Activated CD8-positive, alpha-beta memory T cell treated with anti-CD3 and anti-CD28 coated beads, Interleukin-2, amount 10 ng/mL, durations not matched to agents 7 days and 5 days (primary cell): ENCODE measurements at regions of chr11 and their contacts with region 1.

Region 1: DNA sequence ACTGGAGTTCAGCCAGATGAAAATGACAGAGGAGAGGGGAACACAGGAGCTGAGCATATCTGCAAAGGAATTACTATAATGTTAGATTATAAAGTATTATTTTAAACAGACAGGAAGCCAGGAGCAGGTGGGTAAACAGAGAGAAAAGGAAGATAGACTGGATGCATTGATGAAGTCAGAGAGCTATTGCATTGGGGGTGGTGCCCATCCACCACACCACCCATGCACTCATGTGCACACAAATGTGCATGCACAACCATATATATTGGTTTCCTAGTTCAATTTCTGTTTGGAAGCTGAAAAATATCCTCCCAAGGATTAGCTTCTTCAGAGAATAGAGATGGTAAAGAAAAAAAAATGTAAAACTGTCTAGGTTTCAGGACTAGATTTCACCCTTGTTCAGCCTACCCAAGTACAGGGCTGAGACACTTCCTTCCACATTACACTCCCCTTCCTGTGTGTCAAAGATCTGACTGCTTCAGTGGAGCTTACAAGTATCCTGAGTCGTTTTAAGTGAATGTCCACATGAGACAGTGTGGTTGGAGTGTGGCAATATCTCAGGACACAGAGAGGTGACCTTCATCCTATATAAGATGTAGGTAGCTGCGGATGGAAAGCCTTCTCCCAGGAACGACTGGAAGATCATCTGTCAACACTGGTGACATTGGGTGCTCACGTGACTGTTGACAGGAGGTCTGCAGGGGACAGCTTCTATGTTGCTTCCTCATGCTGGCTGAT is 12.2 kb upstream of the SMPD1 start:
- DNase-seq: no peak
- ATAC-seq: peak; percentile 79
- H3K4me3 Mint-ChIP-seq: peak overlapping the region; percentile 38
- H3K27ac Mint-ChIP-seq: peak overlapping the region; percentile 86
- H3K4me1 Mint-ChIP-seq: peaks cover 31% of the 10 kb centered on the region
- H3K27me3 Mint-ChIP-seq: no peaks in the 10 kb centered on the region

Region 2: GRCh38 chr11:6269994-6270393 is 108.1 kb before region 1 on chr11:
- CTCF ChIA-PET with region 1: no interaction called
- DNase-seq: no peak
- ATAC-seq: no peak
- H3K4me3 Mint-ChIP-seq: no peak overlapping the region
- H3K27ac Mint-ChIP-seq: no peak overlapping the region
- H3K4me1 Mint-ChIP-seq: peaks cover 7% of the 10 kb centered on the region
- H3K27me3 Mint-ChIP-seq: peaks cover 27% of the 10 kb centered on the region

Region 3: GRCh38 chr11:6285019-6285418 is 93.1 kb before region 1 on chr11:
- CTCF ChIA-PET with region 1: no interaction called
- DNase-seq: no peak
- ATAC-seq: no peak
- H3K4me3 Mint-ChIP-seq: no peak overlapping the region
- H3K27ac Mint-ChIP-seq: no peak overlapping the region
- H3K4me1 Mint-ChIP-seq: no peaks in the 10 kb centered on the region
- H3K27me3 Mint-ChIP-seq: peaks cover 65% of the 10 kb centered on the region

Region 4: DNA sequence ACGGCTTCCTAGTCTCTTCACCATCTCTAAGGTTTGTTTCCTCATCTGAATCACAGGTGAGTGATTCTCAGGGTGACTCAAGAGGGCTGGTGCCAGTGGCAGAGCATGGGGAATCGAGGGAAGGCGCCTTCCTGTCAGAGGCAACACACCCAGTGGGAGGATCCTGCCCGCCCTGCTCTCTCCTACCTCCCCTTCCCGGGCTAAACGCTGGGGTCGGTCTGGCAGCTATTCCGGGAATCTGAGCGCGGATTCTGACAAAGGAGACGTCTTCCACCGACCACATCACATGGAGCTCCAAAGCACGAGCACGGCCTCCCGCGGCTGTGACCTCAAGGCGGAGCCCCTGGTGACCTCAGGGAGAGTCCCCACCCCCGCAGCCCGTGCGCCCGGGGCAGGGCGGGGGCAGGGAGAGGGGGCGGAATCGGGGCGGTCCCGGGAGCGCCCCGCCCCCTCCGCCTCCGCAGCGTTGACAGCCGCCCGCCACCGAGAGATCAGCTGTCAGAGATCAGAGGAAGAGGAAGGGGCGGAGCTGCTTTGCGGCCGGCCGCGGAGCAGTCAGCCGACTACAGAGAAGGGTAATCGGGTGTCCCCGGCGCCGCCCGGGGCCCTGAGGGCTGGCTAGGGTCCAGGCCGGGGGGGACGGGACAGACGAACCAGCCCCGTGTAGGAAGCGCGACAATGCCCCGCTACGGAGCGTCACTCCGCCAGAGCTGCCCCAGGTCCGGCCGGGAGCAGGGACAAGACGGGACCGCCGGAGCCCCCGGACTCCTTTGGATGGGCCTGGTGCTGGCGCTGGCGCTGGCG is 12.1 kb after region 1 on chr11 and contains the start of gene SMPD1:
- CTCF ChIA-PET with region 1: interaction called, 31 read pairs
- DNase-seq: peak; percentile 97
- ATAC-seq: peak; percentile 92
- H3K4me3 Mint-ChIP-seq: peak within 1 kb of the TSS; percentile 91
- H3K27ac Mint-ChIP-seq: peak within 1 kb of the TSS; percentile 94
- H3K4me1 Mint-ChIP-seq: peaks cover 38% of the 10 kb centered on the region
- H3K27me3 Mint-ChIP-seq: no peaks in the 10 kb centered on the region
- total RNA-seq, gene SMPD1: 38.9 to 41.9 TPM

Region 5: DNA sequence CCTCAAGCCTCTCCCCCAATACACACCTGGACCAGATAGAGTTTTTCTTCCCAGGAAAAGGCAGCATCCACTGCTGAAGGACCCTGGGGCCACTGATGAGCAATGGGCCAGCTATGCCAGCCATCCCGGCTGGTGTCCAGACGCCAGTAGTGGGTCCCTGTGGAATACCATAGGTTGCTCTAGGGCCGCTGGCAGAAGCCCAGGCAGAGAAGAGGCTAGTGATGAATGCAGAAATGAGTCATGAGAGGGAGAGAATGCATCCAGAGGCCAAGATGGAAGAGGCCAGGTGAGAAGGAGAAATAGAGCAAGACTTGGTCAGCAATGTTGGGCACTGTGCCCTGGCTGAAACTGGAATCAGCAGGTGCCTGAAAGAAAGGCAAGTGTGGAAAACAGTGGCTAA is 53.8 kb after region 1 on chr11:
- CTCF ChIA-PET with region 1: interaction called, 571 read pairs
- DNase-seq: no peak
- ATAC-seq: no peak
- H3K4me3 Mint-ChIP-seq: no peak overlapping the region
- H3K27ac Mint-ChIP-seq: no peak overlapping the region
- H3K4me1 Mint-ChIP-seq: peaks cover 4% of the 10 kb centered on the region
- H3K27me3 Mint-ChIP-seq: no peaks in the 10 kb centered on the region

Region 6: DNA sequence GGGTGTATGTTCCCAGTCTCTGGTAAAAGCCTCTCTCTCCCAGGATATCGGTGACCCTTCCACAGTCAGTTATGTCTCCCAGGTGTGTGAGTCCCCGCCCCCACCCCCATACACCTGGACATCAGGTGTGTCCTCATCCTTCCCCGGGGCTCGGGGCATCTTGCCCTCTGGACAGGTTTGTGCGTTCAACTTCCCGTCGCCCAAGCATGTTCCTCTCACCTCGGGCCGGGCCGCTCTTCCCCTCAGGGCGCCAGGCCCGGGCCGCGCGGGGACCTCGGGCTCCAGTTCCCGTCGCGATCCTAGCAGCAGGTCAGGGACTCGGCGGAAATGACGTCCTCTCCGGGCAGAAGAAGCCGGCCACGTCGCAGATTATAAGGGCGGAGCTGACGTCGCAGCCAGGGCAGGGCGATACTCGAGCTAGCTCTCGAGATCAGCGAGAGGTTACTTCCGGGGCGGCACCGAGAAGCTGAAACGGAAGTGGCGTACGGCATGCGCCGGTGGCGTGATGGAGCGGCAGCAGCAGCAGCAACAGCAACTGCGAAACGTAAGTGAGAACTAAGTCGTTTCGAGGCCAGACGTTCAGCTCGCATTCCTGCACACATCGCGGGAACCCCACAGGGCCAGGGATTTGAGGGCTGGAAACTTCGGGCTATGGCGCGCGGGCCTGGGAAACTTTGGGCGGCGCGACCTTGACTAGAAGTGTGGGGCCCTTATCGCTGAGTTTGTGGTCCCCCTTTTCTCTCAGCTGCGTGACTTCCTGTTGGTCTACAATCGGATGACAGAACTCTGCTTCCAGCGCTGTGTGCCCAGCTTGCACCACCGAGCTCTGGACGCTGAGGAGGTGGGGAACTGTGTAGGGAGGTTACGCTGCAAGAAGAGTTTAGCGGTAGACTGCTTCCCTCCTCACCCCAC is 103.2 kb after region 1 on chr11 and contains the starts of genes ARFIP2 and TIMM10B:
- CTCF ChIA-PET with region 1: interaction called, 39 read pairs
- DNase-seq: peak; percentile 99
- ATAC-seq: peak; percentile 98
- H3K4me3 Mint-ChIP-seq: peak within 1 kb of the TSS; percentile 86
- H3K27ac Mint-ChIP-seq: peak within 1 kb of the TSS; percentile 95
- H3K4me1 Mint-ChIP-seq: peaks cover 32% of the 10 kb centered on the region
- H3K27me3 Mint-ChIP-seq: no peaks in the 10 kb centered on the region
- total RNA-seq, gene ARFIP2: 33.5 to 39.3 TPM
- total RNA-seq, gene TIMM10B: 29.2 to 47.0 TPM

Region 7: GRCh38 chr11:6531267-6531752 is 153.2 kb after region 1 on chr11:
- CTCF ChIA-PET with region 1: interaction called, 15 read pairs
- DNase-seq: no peak
- ATAC-seq: peak; percentile 84
- H3K4me3 Mint-ChIP-seq: no peak overlapping the region
- H3K27ac Mint-ChIP-seq: no peak overlapping the region
- H3K4me1 Mint-ChIP-seq: peaks cover 7% of the 10 kb centered on the region
- H3K27me3 Mint-ChIP-seq: no peaks in the 10 kb centered on the region

Region 8: GRCh38 chr11:6682936-6683861 is 305.1 kb after region 1 on chr11 and contains the start of gene MRPL17:
- CTCF ChIA-PET with region 1: interaction called, 16 read pairs
- DNase-seq: peak; percentile 100
- ATAC-seq: peak; percentile 97
- H3K4me3 Mint-ChIP-seq: peak within 1 kb of the TSS; percentile 97
- H3K27ac Mint-ChIP-seq: peak within 1 kb of the TSS; percentile 97
- H3K4me1 Mint-ChIP-seq: peaks cover 20% of the 10 kb centered on the region
- H3K27me3 Mint-ChIP-seq: no peaks in the 10 kb centered on the region
- total RNA-seq, gene MRPL17: 69.4 to 81.0 TPM